ENCODE measurements at regions of chr2 and their contacts with region 1.

Region 1: GRCh38 chr2:51710222-51710621 is 678.3 kb upstream of the NRXN1 start:
- DNase-seq: no peak
- ATAC-seq: peak; percentile 93
- H3K4me3 ChIP-seq: no peak overlapping the region
- H3K27ac ChIP-seq: no peak overlapping the region
- H3K4me1 ChIP-seq: no peaks in the 10 kb centered on the region
- H3K27me3 ChIP-seq: no peaks in the 10 kb centered on the region
- CTCF ChIP-seq: peak; percentile 33 to 57 (median 57); a peak in 4 of 6 replicates
- EP300 ChIP-seq: no peak
- POLR2A ChIP-seq: no peak
- RAD21 ChIP-seq: peak; percentile 52

Region 2: DNA sequence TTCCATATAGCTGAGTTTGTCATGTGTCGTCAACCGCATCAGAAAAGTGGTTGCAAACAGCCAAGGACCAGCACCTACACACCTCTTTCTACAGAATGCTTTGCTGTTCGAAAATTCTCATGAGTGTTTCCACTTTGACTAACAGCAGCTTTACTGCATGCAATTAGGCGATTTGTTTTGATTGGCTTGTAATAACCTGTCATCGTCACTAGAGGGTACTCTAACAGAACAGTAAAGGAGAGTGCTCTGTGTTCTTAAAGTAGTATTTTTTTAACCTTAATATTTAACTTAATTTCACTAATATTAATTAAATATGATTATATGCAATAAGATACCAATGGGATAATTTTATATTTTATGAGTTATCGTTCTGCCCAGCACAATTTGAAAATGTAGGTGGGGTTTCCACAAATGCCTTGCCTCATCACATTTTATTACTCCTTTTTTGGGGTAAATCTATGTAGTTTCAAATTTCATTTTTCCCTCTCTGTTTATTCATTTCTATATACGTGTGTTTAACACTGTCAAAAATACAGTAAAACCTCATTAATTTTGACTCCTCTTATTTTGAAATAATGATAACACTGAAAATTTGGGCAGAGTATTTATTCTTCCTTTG is 1180.5 kb before region 1 on chr2:
- CTCF ChIA-PET with region 1: no interaction called
- POLR2A ChIA-PET with region 1: no interaction called
- RAD21 ChIA-PET with region 1: no interaction called
- SMC1A ChIA-PET with region 1: interaction called, 3 read pairs
- in situ Hi-C with region 1: loop called (anchors 25 kb)
- intact Hi-C with region 1: loop called (anchors 2 kb)
- DNase-seq: no peak
- ATAC-seq: peak; percentile 86
- H3K4me3 ChIP-seq: no peak overlapping the region
- H3K27ac ChIP-seq: no peak overlapping the region
- H3K4me1 ChIP-seq: no peaks in the 10 kb centered on the region
- H3K27me3 ChIP-seq: no peaks in the 10 kb centered on the region
- CTCF ChIP-seq: peak; percentile 66 to 70 (median 69)
- EP300 ChIP-seq: no peak
- POLR2A ChIP-seq: no peak
- RAD21 ChIP-seq: peak; percentile 65

Region 3: DNA sequence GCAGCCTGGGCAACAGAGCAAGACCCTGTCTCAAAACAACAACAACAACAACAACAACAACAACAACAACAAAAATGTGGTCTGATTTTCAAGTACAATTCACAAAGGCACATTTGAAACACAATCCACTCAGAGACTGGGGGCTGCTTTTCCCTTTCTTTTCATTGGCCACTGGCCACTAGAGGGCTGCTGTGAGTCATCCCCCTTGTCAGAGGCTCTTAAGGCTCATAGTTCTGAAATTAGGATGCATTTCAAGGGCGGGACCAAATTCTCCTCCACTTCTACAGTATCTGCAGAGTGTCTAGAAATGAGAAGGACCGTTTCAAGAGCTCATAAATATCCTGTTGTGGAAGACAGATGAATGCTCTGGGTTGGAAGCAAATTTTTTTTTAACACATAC is 963.7 kb before region 1 on chr2:
- CTCF ChIA-PET with region 1: interaction called, 5 read pairs
- POLR2A ChIA-PET with region 1: no interaction called
- RAD21 ChIA-PET with region 1: no interaction called
- SMC1A ChIA-PET with region 1: no interaction called
- in situ Hi-C with region 1: no loop called
- intact Hi-C with region 1: loop called (anchors 5 kb)
- DNase-seq: no peak
- ATAC-seq: peak; percentile 85
- H3K4me3 ChIP-seq: no peak overlapping the region
- H3K27ac ChIP-seq: no peak overlapping the region
- H3K4me1 ChIP-seq: no peaks in the 10 kb centered on the region
- H3K27me3 ChIP-seq: no peaks in the 10 kb centered on the region
- CTCF ChIP-seq: peak; percentile 41 to 71 (median 64)
- EP300 ChIP-seq: no peak
- POLR2A ChIP-seq: no peak
- RAD21 ChIP-seq: peak; percentile 55